HEK293T (cell line): ENCODE measurements at regions of chr12 and their contacts with region 1.

Region 1: DNA sequence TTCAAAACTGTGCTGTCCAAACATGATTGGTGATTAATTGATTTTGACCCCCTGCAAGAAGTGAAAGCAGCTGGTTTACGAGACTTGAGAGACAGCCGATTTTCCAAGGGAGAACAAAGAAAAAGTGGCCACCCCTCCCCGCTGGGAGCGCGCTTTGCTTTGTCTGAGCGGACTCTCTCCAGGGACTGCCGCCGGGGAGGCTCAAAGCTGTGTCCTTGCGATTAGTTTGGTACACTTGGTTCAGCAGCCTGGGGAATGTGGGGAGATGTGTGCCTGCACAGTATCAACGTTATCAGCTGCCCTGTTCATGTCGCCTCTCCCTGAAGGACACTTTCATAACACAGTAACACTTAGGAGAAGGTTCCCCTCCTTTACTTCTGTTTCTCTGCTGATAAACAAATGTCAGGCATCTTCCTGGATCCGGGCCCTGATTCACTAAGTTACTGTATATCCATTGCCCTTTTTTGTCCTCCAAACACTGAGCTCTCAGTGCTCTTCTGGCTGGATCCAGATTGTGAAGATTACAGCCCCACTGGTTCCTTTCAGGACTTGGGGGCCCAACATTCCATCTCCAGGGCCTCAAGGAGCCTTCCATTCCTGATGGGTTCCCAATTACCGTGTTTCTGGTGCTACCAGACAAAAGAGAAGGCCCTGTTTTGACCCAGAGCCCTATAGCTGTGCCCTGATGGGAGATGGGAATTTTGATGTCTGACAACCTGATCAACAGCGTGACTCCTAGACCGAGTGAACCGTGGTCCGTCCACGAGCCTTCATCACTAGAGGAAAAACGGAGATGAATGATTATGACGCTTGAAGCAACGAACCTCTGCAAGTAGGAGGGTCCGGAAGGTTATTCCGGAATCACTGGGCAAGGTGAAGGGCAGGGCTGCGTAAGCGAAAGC is 31.7 kb upstream of the TUBA1C start:
- DNase-seq: peak; percentile 45

Region 2: GRCh38 chr12:49188914-49189367 is 44.2 kb before region 1 on chr12 and contains the start of gene TUBA1A:
- CTCF ChIA-PET with region 1: interaction called, 4 read pairs
- POLR2A ChIA-PET with region 1: interaction called, 10 read pairs
- DNase-seq: peak; percentile 93

Region 3: DNA sequence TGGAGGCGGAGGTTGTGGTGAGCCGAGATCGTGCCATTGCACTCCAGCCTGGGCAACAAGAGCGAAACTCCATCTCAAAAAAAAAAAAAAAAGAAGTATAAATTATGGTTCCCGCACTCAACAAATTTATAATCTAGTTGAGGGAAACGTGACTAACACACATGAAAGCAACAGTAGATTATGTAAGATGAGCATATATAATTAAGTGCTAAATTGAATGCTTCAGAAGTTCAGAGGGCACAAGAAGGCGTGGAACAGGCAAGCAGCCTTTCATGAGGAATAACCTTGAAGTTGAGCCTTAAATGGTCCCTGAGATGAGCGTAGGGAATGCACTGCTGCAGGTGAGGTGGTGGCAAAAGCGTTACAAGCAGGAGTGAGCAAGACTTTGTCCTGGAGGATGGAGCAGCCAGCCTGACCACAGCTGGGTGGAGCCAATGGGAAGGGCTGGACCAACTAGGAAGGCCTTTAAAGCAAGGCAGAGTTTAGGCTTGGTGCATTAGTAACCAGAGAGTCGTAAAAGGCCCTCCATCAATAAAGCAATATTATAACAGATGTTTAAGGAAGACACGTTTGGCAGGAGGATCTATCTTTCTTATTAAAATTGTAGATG is 13.7 kb before region 1 on chr12:
- CTCF ChIA-PET with region 1: interaction called, 6 read pairs
- POLR2A ChIA-PET with region 1: interaction called, 16 read pairs
- DNase-seq: no peak

Region 4: GRCh38 chr12:49322708-49323523 is 89.7 kb after region 1 on chr12 and contains the start of gene TROAP:
- CTCF ChIA-PET with region 1: no interaction called
- POLR2A ChIA-PET with region 1: no interaction called
- DNase-seq: peak; percentile 97